AG04450 (cell line): ENCODE measurements at regions of chr4 and their contacts with region 1.

Region 1: GRCh38 chr4:20299515-20299914 is 47.8 kb downstream of the SLIT2 start:
- DNase-seq: peak; percentile 13
- H3K4me3 ChIP-seq: no peak overlapping the region
- H3K27ac ChIP-seq: no peak overlapping the region
- H3K27me3 ChIP-seq: no peaks in the 10 kb centered on the region
- CTCF ChIP-seq: peak; percentile 66

Region 2: GRCh38 chr4:19913650-19914049 is 385.9 kb before region 1 on chr4:
- CTCF ChIA-PET with region 1: no interaction called
- POLR2A ChIA-PET with region 1: no interaction called
- DNase-seq: no peak
- H3K4me3 ChIP-seq: no peak overlapping the region
- H3K27ac ChIP-seq: no peak overlapping the region
- H3K27me3 ChIP-seq: no peaks in the 10 kb centered on the region
- CTCF ChIP-seq: no peak

Region 3: DNA sequence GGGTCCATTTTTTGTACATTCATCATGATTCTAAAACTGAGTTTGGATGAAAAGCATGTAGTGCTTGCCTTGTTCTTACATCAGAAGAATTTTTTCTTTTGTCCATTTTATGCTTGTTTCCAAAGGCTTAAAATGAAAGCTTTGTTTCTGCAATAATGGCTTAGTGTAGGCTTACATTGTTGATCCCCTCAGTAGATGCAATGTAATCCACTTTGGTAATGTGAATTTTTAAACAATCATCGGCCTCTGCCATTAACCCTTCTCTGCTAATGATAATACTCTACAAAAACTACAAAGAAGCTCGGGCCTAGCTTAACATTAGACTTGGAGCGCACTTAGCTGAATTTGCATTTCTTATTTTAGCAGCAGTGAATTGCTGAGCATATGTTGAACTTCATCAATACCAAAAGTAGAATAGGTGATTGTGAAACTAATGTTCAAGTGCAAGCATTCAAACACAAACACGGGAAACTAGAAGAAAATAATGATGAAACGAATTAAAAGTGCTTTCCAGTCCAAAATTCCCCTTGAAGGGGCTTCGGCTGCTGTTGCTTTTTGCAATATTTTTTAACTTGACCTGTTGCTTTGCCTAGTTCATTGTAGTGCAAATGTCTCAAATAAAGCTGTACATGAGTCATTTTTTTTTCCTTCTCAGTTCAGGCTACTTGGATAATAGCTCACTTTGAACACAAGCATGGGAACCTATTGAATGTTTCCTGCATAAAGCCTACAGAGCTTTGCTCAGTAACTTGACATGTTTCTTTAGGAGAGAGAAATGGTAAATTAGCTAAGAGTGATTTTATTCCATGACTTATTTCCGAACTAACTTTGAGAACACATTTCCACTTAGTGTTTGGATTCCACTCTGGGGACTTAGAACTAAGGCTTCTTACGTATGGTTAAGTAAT is 18.7 kb after region 1 on chr4:
- CTCF ChIA-PET with region 1: interaction called, 10 read pairs
- POLR2A ChIA-PET with region 1: no interaction called
- DNase-seq: no peak
- H3K4me3 ChIP-seq: peak overlapping the region; percentile 14; the same call in 1 of the 2 replicates
- H3K27ac ChIP-seq: peak overlapping the region; percentile 25
- H3K27me3 ChIP-seq: no peaks in the 10 kb centered on the region
- CTCF ChIP-seq: no peak

Region 4: GRCh38 chr4:20428436-20429160 is 129.1 kb after region 1 on chr4:
- CTCF ChIA-PET with region 1: interaction called, 81 read pairs
- POLR2A ChIA-PET with region 1: no interaction called
- DNase-seq: no peak
- H3K4me3 ChIP-seq: no peak overlapping the region
- H3K27ac ChIP-seq: no peak overlapping the region
- H3K27me3 ChIP-seq: no peaks in the 10 kb centered on the region
- CTCF ChIP-seq: peak; percentile 46